ENCODE measurements at regions of chr12 and their contacts with region 1.

Region 1: GRCh38 chr12:52278541-52279421 is 4.3 kb downstream of the KRT86 start:
- DNase-seq: peak; percentile 79
- ATAC-seq: peak; percentile 99
- H3K4me3 Mint-ChIP-seq: no peak overlapping the region
- H3K27ac Mint-ChIP-seq: no peak overlapping the region
- H3K4me1 Mint-ChIP-seq: peaks cover 5% of the 10 kb centered on the region
- H3K27me3 Mint-ChIP-seq: peaks cover 60% of the 10 kb centered on the region

Region 2: DNA sequence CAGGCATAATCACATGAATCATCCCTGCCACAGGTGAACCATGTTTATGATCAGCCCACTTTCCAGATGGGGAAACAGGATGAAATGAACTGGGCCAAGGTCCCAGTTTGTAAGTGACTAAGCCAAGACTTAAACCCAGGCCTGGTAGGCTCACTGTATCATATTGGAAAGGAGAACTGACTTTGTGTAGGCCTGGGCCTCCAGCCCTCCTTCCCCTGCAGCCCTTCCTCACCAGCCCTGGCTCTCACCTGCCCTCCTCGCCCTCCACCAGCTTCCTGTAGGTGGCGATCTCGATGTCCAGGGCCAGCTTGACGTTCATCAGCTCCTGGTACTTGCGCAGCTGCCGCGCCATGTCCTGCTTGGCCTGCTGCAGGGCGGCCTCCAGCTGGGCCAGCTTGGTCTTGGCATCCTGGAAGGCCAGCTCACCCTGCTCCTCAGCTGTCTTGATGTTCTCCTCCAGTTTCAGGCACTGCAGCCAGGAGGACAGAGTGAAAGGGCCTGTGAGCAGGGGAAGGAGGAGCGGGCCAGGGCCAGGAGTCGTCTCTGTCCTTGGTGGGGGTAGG is 106.8 kb before region 1 on chr12:
- CTCF ChIA-PET with region 1: interaction called, 13 read pairs
- DNase-seq: peak; percentile 55
- ATAC-seq: no peak
- H3K4me3 Mint-ChIP-seq: no peak overlapping the region
- H3K27ac Mint-ChIP-seq: no peak overlapping the region
- H3K4me1 Mint-ChIP-seq: peaks cover 3% of the 10 kb centered on the region
- H3K27me3 Mint-ChIP-seq: no peaks in the 10 kb centered on the region

Region 3: GRCh38 chr12:52258335-52258901 is 20.4 kb before region 1 on chr12:
- CTCF ChIA-PET with region 1: interaction called, 74 read pairs
- DNase-seq: no peak
- ATAC-seq: peak; percentile 23
- H3K4me3 Mint-ChIP-seq: no peak overlapping the region
- H3K27ac Mint-ChIP-seq: no peak overlapping the region
- H3K4me1 Mint-ChIP-seq: peaks cover 13% of the 10 kb centered on the region
- H3K27me3 Mint-ChIP-seq: peaks cover 71% of the 10 kb centered on the region

Region 4: GRCh38 chr12:52295663-52296062 is 16.9 kb after region 1 on chr12:
- CTCF ChIA-PET with region 1: interaction called, 20 read pairs
- DNase-seq: no peak
- ATAC-seq: no peak
- H3K4me3 Mint-ChIP-seq: no peak overlapping the region
- H3K27ac Mint-ChIP-seq: no peak overlapping the region
- H3K4me1 Mint-ChIP-seq: peaks cover 6% of the 10 kb centered on the region
- H3K27me3 Mint-ChIP-seq: peaks cover 59% of the 10 kb centered on the region

Region 5: GRCh38 chr12:52327052-52327829 is 48.5 kb after region 1 on chr12:
- CTCF ChIA-PET with region 1: interaction called, 28 read pairs
- DNase-seq: peak; percentile 86
- ATAC-seq: peak; percentile 97
- H3K4me3 Mint-ChIP-seq: no peak overlapping the region
- H3K27ac Mint-ChIP-seq: no peak overlapping the region
- H3K4me1 Mint-ChIP-seq: peaks cover 18% of the 10 kb centered on the region
- H3K27me3 Mint-ChIP-seq: peaks cover 39% of the 10 kb centered on the region

Region 6: GRCh38 chr12:52645120-52645761 is 366.5 kb after region 1 on chr12:
- CTCF ChIA-PET with region 1: no interaction called
- DNase-seq: peak; percentile 87
- ATAC-seq: peak; percentile 97
- H3K4me3 Mint-ChIP-seq: peak overlapping the region; percentile 17
- H3K27ac Mint-ChIP-seq: peak overlapping the region; percentile 94
- H3K4me1 Mint-ChIP-seq: peaks cover 35% of the 10 kb centered on the region
- H3K27me3 Mint-ChIP-seq: peaks cover 7% of the 10 kb centered on the region